HEK293 (cell line): ENCODE measurements at regions of chr4 and their contacts with region 1.

Region 1: DNA sequence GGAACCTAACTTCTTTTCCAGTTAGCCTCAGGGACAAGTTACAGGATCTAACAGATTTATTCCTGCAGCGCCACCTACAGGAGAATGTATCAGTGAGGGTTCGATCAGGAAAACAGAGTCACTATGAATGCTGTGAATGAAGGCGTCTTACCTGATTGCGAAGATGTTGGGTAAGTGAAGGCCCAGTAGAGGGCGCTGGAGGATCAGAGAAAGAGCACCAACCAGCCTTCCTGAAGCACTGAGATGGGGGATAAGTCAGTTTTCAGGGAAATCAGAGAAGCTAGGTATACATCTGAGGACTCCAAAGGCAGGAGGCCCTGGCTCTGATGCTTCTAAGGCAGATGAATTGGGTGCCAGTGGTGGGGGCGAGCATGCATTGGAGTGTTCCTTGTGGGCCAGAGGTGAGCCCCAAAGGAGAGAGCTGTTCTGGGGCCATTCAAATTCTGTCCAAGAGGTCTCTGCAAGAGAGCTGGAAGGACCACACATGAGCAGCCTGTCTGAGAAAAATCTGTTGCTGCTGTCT is 169.9 kb upstream of the AADAT start:
- H3K4me3 ChIP-seq: no peak overlapping the region
- H3K27ac ChIP-seq: no peak overlapping the region
- H3K4me1 ChIP-seq: no peaks in the 10 kb centered on the region
- CTCF ChIP-seq: peak; percentile 76

Region 2: DNA sequence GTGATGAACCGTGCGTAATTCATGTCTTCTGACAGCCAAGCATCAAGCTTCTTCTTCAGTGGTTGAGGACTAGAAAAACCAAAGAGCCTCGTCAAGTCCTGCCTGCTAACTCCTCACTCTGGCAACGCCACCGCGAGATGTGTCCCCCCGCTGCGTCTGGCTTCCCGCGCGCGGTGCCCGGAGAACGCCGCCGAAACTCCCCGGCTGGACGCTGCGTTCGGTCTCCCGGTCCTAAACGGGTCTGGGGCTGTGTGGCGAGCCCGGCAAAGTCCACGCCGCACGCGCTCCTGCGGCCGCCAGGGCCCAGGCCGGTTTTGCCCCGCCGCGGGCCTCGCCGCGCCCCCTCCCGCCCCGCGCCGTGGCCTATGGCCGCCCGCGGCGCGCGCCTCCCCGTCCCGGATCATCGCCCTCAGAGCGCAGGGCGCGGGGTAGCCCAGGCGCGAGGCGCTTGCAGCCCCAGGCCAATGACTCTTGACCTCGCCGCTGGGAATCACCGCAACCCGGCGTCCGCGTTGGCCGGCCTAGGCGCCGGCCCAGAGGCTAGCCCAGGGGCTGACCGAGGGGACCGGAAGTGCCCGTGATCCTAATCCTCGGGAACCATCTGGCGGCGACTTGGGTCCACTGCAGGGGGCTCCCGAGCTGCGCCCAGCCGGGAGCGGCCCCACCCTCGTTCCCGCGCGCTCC is 169.9 kb before region 1 on chr4 and contains the start of gene AADAT:
- CTCF ChIA-PET with region 1: no interaction called
- POLR2A ChIA-PET with region 1: no interaction called
- H3K4me3 ChIP-seq: peak within 1 kb of the TSS; percentile 66
- H3K27ac ChIP-seq: peak within 1 kb of the TSS; percentile 69; the same call in 1 of the 2 replicates
- H3K4me1 ChIP-seq: no peaks in the 10 kb centered on the region
- CTCF ChIP-seq: peak; percentile 72; the same call in 1 of the 2 replicates

Region 3: GRCh38 chr4:170111100-170111499 is 148.6 kb before region 1 on chr4:
- CTCF ChIA-PET with region 1: no interaction called
- POLR2A ChIA-PET with region 1: no interaction called
- H3K4me3 ChIP-seq: no peak overlapping the region
- H3K27ac ChIP-seq: no peak overlapping the region
- H3K4me1 ChIP-seq: no peaks in the 10 kb centered on the region
- CTCF ChIP-seq: no peak

Region 4: DNA sequence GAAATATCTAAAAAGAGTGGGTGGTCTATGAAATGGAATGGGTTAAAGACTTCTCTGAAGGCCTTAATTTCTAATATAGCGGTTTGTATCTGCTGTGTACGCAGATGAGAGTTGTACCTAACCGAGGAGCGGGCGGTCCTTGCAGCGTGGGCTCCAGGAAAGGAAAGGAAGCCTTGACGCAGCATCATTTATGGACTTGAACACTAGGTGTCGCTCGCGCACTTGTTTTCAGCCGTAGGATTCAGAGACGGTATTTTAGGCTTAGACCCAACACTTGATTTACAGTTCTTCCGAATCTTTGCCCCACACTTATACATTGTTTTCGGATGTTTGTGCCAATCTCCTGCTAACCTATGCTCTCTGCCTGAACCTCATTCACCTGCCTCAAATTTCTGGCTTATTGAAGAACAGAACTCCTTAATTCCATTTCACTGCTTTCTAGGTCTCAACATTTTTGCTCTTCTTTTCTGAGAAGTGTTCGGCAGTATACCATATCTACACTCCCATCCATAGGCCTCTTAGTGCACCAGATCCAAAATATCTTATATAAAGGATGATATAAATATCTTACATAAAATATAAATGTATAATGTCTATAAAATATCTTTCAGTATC is 121.0 kb before region 1 on chr4:
- CTCF ChIA-PET with region 1: interaction called, 25 read pairs
- POLR2A ChIA-PET with region 1: no interaction called
- H3K4me3 ChIP-seq: no peak overlapping the region
- H3K27ac ChIP-seq: no peak overlapping the region
- H3K4me1 ChIP-seq: no peaks in the 10 kb centered on the region
- CTCF ChIP-seq: no peak

Region 5: GRCh38 chr4:170242471-170242870 is 17.2 kb before region 1 on chr4:
- CTCF ChIA-PET with region 1: interaction called, 28 read pairs
- POLR2A ChIA-PET with region 1: no interaction called
- H3K4me3 ChIP-seq: no peak overlapping the region
- H3K27ac ChIP-seq: no peak overlapping the region
- H3K4me1 ChIP-seq: no peaks in the 10 kb centered on the region
- CTCF ChIP-seq: no peak

Region 6: GRCh38 chr4:170248576-170248975 is 11.1 kb before region 1 on chr4:
- CTCF ChIA-PET with region 1: interaction called, 28 read pairs
- POLR2A ChIA-PET with region 1: no interaction called
- H3K4me3 ChIP-seq: no peak overlapping the region
- H3K27ac ChIP-seq: no peak overlapping the region
- H3K4me1 ChIP-seq: no peaks in the 10 kb centered on the region
- CTCF ChIP-seq: no peak

Region 7: DNA sequence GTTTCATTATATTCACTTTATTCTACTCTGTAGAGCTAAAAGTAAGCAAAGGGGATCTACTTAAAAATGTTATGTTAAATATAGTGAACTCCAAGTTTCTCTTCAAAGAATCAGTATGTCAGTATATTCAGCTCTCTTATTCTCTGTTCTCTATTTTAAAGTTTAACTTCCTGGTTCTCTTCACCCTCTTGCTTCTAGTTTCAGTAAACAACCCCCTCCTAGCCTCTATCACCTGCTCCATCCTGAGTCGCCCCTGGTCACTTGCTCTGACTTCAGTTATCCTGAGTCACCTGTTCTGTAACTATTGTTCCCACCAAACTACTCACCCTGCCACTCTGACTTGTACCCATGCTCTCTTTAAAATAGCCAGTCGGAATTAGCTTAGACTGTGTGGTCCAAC is 10.9 kb after region 1 on chr4:
- CTCF ChIA-PET with region 1: interaction called, 24 read pairs
- POLR2A ChIA-PET with region 1: no interaction called
- H3K4me3 ChIP-seq: no peak overlapping the region
- H3K27ac ChIP-seq: no peak overlapping the region
- H3K4me1 ChIP-seq: no peaks in the 10 kb centered on the region
- CTCF ChIP-seq: no peak

Region 8: DNA sequence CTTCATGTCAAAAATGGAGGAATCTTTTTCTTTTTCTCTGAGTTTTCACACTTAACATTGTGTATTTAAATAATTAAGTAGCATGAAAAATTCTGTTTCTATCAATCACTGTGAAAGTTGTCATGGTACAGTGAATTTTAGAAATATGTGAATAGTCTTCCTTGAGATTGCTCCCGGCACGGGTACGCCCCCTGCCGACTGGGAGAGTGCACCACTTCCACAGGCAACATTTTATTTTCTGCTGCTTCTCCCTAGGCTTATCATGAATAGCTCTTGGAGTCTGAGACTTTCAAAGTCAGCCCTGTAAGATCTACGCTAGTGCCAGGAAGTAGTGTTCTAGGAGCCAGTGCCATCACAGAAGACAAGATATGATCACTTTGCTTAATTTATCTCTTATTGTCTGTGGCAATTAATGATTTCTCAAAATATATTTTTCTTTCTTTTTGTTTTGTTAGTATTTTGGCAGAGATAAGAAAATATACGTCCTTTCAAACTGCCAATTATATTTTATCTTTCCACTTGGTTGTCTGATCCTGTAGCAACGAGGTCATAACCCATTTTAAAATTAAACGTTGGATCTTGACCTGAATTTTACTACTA is 593.8 kb after region 1 on chr4:
- CTCF ChIA-PET with region 1: interaction called, 14 read pairs
- POLR2A ChIA-PET with region 1: no interaction called
- H3K4me3 ChIP-seq: no peak overlapping the region
- H3K27ac ChIP-seq: no peak overlapping the region
- H3K4me1 ChIP-seq: no peaks in the 10 kb centered on the region
- CTCF ChIP-seq: no peak